Caco-2 (cell line): ENCODE measurements at regions of chr12 and their contacts with region 1.

Region 1: DNA sequence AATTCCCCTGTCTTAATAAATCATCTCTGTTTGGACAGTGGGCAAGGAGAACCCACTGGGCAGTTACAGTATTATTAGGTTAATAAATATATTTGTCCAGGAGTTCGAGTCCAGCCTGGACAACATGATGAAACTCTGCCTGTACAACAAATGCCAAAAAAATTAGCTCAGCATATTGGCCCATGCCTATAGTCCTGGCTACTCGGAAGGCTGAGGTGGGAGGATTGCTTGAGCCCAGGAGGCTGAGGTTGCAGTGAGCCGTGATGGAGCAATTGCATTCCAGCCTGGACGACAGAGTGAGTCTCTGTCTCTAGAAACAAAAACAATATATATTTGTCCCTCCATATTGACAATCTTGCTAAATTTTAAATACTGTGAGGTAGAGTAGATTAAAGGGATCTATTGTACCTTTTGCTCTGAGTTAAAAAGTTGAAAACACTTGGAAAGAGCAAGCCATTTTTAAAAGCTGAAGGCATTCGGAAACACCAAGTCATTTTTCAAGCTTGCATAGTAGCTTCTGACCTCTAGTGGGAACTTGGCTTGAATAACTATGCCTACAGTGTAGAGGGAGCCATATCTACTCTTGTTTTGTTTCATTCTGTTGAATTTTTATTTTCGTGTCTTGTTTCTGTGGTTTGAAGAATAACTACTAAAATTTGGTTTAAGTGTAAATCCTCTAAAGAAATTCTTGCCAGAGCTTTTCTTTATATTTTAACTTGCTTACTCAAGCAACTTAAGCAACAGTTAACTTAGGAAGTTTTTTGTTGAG is 14.6 kb upstream of the EEA1 start:
- DNase-seq: no peak
- H3K4me3 ChIP-seq: no peak overlapping the region
- H3K4me3 Mint-ChIP-seq: no peak overlapping the region
- H3K27ac Mint-ChIP-seq: peak overlapping the region; percentile 80
- H3K4me1 ChIP-seq: peaks cover 43% of the 10 kb centered on the region
- H3K4me1 Mint-ChIP-seq: peaks cover 16% of the 10 kb centered on the region
- H3K27me3 ChIP-seq: no peaks in the 10 kb centered on the region
- H3K27me3 Mint-ChIP-seq: no peaks in the 10 kb centered on the region
- CTCF ChIP-seq: peak; percentile 12

Region 2: DNA sequence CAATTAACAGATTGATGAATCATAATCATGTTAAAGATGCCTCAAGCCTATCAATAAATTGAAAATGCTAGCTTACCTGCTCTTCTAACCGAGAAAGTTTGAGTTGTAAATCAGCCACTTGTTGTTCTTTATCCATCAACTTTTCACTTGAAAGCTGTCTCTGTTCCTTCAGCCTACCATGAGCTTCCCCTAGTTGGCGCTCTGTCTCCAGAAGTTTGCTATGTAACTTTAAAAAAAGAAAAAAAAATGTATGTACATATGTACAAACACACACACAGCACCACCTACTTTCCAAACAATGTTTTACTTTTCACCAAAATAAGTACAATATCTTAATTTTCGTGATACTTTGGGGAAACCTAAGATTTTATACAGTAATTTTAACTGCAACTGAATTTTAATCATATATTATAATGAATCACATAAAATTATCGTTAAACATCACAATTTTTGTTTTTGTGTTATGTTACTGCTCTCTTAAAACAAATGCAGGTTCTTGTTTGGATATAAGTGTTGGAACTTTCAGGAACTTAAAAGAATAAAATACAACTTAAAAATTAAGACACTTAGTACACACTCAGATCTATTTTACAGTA is 115.7 kb before region 1 on chr12:
- CTCF ChIA-PET with region 1: interaction called, 3 read pairs
- POLR2A ChIA-PET with region 1: no interaction called
- intact Hi-C with region 1: loop called (anchors 5 kb)
- DNase-seq: peak; percentile 46 to 61
- H3K4me3 ChIP-seq: no peak overlapping the region
- H3K4me3 Mint-ChIP-seq: no peak overlapping the region
- H3K27ac Mint-ChIP-seq: no peak overlapping the region
- H3K4me1 ChIP-seq: no peaks in the 10 kb centered on the region; the same call in 1 of the 2 replicates
- H3K4me1 Mint-ChIP-seq: no peaks in the 10 kb centered on the region
- H3K27me3 ChIP-seq: no peaks in the 10 kb centered on the region
- H3K27me3 Mint-ChIP-seq: no peaks in the 10 kb centered on the region
- CTCF ChIP-seq: peak; percentile 54 to 94

Region 3: DNA sequence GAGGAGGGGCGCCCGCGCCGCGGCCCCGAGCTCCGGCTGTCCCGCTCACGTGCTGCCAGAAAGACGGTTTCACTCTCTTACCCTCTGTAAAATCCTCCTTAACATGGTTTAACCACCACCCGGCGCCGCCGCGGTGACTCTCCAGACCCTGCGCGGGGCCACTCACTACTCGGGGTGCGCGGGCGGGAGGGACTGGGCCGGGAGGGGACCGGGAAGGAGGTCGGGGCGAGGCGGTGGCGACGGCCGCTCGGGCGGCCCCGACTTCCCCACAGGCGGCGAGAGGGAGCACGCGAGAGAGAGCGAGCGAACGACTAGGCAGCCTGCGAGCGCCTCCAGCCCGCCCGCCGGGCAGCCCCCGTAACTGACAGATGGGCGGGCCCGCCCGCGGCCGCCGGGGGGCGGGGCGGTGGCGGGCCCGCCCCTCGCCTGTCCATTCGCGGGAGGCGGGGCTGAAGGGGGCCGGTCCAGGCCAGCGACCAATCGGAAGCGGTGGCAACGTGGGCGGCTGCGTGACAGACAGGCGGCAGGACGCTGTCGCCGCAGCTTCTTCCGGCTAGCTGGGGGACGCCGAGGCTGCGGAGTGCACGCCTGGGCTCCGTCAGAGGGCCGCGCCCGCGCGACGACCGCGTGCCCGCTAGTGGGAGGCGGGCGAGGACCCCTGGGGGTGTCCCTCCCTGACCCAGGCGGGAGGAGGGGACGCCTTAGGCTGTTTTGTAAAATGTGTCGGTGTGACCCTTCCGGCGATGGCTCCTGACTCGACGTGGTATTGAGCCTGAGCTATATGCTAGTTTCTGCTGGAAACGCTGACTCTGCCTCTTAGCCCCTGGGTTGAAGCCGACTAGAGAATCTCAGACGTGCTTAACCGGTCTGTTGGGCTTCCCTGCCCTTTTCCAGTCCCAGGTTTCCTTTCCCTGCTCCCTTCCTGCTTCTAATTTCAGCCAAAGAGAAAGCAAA is 14.4 kb before region 1 on chr12 and contains the start of gene EEA1:
- CTCF ChIA-PET with region 1: interaction called, 8 read pairs
- POLR2A ChIA-PET with region 1: interaction called, 26 read pairs
- intact Hi-C with region 1: loop called (anchors 1 kb)
- DNase-seq: peak; percentile 97 to 98
- H3K4me3 ChIP-seq: peak within 1 kb of the TSS; percentile 88
- H3K4me3 Mint-ChIP-seq: peak within 1 kb of the TSS; percentile 90
- H3K27ac Mint-ChIP-seq: peak within 1 kb of the TSS; percentile 93
- H3K4me1 ChIP-seq: peaks cover 54% of the 10 kb centered on the region
- H3K4me1 Mint-ChIP-seq: peaks cover 50% of the 10 kb centered on the region
- H3K27me3 ChIP-seq: no peaks in the 10 kb centered on the region
- H3K27me3 Mint-ChIP-seq: no peaks in the 10 kb centered on the region
- CTCF ChIP-seq: peak in 1 of 2 experiments; percentile 12
- total RNA-seq, gene EEA1: 68.9 TPM in 2 replicates

Region 4: DNA sequence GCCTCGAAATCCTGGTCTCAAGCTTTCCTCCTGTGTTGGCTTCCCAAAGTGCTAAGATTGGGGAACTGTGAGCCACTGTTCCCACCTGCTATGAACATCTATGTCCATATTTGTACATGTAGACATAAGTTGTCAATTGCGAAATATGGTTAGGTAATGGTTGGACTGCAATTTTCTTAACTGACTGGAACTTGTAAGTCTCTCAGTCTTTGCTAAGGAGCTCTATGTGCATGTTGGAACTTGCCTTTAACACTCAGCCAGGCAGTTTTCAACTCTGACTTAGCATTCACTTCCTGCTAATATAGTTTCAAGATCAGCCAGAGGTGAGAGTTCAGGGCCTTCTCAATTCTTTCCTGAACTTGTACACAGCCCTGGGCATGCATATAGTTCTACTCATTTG is 29.9 kb after region 1 on chr12:
- CTCF ChIA-PET with region 1: no interaction called
- POLR2A ChIA-PET with region 1: no interaction called
- intact Hi-C with region 1: loop called (anchors 2 kb)
- DNase-seq: peak; percentile 50
- H3K4me3 ChIP-seq: no peak overlapping the region
- H3K4me3 Mint-ChIP-seq: no peak overlapping the region
- H3K27ac Mint-ChIP-seq: peak overlapping the region; percentile 53
- H3K4me1 ChIP-seq: peaks cover 20% of the 10 kb centered on the region
- H3K4me1 Mint-ChIP-seq: peaks cover 7% of the 10 kb centered on the region
- H3K27me3 ChIP-seq: no peaks in the 10 kb centered on the region
- H3K27me3 Mint-ChIP-seq: no peaks in the 10 kb centered on the region
- CTCF ChIP-seq: no peak